Dorsolateral prefrontal cortex (tissue), 120 donors: ENCODE measurements at regions of chr3 and their contacts with region 1.

Region 1: GRCh38 chr3:54882129-54882833 is 45.6 kb downstream of the LRTM1 start:
- DNase-seq: no peak
- H3K4me3 ChIP-seq: no peak overlapping the region
- H3K27ac ChIP-seq: peak overlapping the region in 3 of 59 donors; percentile 4 to 43 (median 40)
- H3K27me3 ChIP-seq: no peaks in the 10 kb centered on the region
- CTCF ChIP-seq: no peak

Region 2: DNA sequence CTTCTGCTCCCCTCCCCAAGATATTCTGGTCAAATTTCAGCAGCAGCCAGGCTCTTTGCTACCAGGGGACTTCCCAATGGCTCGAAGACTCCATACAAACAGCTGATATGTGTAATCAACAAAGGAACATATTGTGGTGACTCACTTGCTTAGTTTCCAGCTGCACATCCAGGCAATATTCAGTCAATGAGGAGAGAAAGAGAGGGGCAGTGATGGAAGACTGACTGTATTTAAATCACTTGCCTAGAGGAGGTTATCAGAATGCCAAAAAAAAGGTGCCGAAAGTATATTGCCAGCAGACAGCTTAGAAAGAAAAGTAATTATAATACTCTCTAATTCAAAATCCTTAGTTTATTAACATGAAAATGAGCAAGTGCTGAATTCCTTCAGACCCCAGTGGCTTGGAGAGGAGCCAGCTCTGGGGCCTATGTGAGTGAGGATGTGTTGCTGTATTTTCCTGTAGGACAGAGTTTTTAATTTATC is 191.0 kb before region 1 on chr3:
- intact Hi-C with region 1: no loop called
- DNase-seq: no peak
- H3K4me3 ChIP-seq: no peak overlapping the region
- H3K27ac ChIP-seq: no peak overlapping the region
- H3K27me3 ChIP-seq: no peaks in the 10 kb centered on the region
- CTCF ChIP-seq: no peak

Region 3: GRCh38 chr3:55000546-55000945 is 118.3 kb after region 1 on chr3:
- intact Hi-C with region 1: loop called in 1 of 2 experiments (anchors 10 kb)
- DNase-seq: no peak
- H3K4me3 ChIP-seq: no peak overlapping the region
- H3K27ac ChIP-seq: no peak overlapping the region
- H3K27me3 ChIP-seq: no peaks in the 10 kb centered on the region
- CTCF ChIP-seq: no peak